AG04449 (cell line): ENCODE measurements at regions of chr7 and their contacts with region 1.

Region 1: DNA sequence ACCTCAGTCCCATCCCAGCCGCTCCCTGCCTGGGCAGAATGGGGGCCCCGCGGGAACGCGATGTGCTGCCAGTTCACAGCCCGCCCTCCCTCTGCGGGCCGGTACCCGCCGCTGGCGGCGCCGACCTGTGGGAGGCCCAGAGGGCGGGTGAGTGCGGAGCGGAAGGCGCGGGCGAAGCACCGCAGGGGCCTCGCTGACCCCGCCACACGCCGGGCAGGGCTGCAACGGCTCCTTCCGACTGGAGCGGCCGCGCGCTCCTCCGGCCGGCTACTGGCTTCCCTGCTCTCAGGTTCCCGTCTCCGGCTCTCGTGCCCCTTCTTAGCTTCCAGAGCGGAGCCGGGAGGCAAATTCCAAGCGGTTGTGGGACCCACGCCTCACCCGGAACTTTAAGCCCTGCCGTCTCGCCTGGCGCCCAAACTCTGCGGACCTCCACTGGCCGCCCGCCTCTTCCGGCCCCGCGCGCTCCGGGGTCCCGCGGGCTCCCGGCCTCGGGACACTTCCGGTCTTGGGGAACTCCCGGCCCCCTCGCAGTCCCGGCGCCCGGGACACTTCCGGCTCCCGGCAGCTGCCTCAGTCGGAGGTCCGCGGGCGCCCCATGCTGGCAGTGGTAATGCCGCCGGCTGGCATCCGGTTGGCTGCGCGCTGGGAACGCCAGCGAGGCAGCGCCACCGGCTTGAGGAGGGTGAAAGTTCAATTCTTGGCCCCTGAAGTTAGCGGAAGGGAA is at the start of gene CYREN:
- DNase-seq: peak; percentile 46
- H3K4me3 ChIP-seq: peak within 1 kb of the TSS; percentile 73
- CTCF ChIP-seq: peak; percentile 91

Region 2: DNA sequence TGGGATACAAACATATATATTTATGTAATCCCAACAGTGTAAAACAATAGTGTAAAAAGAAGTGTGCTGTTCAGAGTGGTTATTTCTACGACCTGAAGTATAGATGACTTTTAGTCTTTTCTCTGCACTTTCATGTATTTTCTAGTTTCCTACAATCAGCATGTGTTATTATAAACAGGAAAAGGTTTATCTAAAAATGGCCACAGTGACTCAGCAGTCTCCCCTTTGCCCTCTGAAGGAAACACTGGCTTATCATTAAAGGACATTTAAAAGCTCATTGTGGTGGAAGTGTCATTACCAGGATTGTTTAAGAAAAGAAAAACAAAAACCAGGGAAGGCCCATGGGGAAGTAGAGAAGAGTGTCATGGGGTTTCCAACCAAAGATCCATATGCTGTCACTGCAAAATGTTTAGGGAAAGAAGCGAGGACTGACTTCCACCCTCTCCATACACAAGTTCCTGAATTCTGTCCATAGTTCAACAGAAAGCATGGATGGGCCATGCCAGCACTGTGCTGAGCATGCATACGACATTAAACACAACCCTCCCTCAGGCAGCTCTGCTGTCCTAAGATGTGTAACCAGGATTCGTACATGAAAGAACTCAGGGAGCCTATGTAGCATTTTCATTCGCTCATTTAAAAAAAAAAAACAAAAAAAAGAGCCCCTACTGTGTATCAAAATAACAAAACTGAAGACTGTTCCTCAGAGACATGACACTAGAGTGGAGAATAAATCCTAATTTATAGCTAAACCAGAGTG is 10.2 kb before region 1 on chr7:
- CTCF ChIA-PET with region 1: interaction called, 19 read pairs
- POLR2A ChIA-PET with region 1: no interaction called
- DNase-seq: no peak
- H3K4me3 ChIP-seq: no peak overlapping the region
- CTCF ChIP-seq: no peak

Region 3: DNA sequence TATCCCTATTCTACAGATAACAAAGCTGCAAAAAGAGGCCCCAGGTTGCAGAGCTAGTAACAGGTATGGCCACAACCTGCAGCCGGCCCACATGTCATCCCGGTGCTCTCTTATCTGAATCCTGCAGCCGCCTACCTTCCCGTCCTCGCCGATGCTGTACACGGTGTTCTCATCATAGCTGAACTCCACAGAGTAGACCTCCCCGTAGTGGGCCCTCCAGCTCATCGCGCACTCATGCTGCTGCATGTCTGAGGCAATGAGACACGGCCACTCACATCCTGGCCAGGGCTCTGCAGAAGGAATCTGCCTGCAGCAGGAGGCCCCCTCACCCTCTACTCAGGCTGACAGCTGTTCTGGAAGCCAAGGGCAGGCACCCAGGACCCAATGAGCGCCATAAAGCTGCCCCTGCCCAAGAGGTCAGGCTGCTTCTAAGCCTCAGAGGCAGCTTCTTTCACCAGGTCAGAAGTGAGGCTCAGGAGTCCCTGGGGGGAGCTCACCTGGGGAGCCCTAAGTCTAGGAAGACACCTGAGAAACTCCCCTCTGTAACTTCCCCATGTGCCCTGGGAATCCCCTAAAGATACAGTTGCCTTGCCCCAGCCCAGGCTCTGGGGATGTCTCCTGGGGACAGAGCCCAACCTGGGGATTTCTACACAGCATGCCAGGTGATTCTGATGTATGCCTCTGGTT is 18.0 kb after region 1 on chr7:
- CTCF ChIA-PET with region 1: interaction called, 25 read pairs
- POLR2A ChIA-PET with region 1: interaction called, 3 read pairs
- DNase-seq: no peak
- H3K4me3 ChIP-seq: no peak overlapping the region
- CTCF ChIP-seq: no peak

Region 4: DNA sequence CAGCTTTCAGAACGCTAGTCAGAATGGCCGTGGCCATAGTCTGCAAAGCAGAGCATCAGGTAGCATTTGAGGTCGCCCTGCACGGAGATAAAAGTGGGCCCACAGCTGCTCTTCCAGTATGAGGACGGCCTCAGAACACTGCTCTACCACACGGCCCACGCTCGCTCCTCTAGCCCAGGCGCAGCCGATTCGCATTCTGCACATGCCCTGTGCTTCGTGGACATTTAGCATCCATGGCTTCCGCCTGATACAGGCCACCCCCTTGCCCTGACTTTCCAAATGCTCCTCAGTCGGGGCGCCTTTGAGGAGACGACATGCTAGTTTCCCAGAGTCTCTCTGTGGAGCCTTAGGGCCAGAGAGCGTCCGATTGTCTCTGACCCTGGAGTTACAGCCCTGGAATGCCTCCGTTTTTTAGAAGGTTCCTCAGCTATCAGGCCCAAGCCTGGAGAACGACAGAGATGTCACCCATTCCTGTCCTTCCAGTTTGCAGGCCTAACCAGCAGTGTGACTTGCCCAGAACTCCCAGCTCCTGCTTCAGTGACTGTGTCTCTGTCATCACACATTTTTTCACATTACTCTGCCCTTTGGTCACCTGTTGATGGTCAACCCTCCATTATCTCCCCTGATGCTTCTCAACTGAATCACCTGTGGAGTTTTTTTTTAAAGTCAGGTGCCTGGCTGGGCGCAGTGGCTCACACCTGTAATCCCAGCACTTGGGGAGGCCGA is 77.5 kb after region 1 on chr7:
- CTCF ChIA-PET with region 1: no interaction called
- POLR2A ChIA-PET with region 1: no interaction called
- DNase-seq: no peak
- H3K4me3 ChIP-seq: no peak overlapping the region
- CTCF ChIP-seq: no peak